ENCODE measurements at regions of chr16 and their contacts with region 1.

Region 1: GRCh38 chr16:71610936-71611871 is 14.8 kb upstream of the MARVELD3 start:
- DNase-seq: peak; percentile 43 to 82 (median 72)
- ATAC-seq: peak; percentile 96
- H3K4me3 ChIP-seq: no peak overlapping the region
- H3K4me3 Mint-ChIP-seq: peak overlapping the region in 4 of 10 donors; percentile 21 to 56 (median 38)
- H3K27ac ChIP-seq: no peak overlapping the region
- H3K27ac Mint-ChIP-seq: no peak overlapping the region
- H3K4me1 ChIP-seq: no peaks in the 10 kb centered on the region
- H3K4me1 Mint-ChIP-seq: peaks cover 0 to 5% (median 0%) of the 10 kb centered on the region in 7 donors
- H3K27me3 ChIP-seq: no peaks in the 10 kb centered on the region
- H3K27me3 Mint-ChIP-seq: peaks cover 11 to 36% (median 22%) of the 10 kb centered on the region in 5 donors

Region 2: GRCh38 chr16:71412270-71413160 is 198.7 kb before region 1 on chr16:
- CTCF ChIA-PET with region 1: interaction called, 10 read pairs
- POLR2A ChIA-PET with region 1: no interaction called
- intact Hi-C with region 1: loop called (anchors 1 kb)
- DNase-seq: peak; percentile 32 to 66 (median 55)
- ATAC-seq: peak; percentile 80
- H3K4me3 ChIP-seq: no peak overlapping the region
- H3K4me3 Mint-ChIP-seq: peak overlapping the region in 1 of 10 donors; percentile 19
- H3K27ac ChIP-seq: no peak overlapping the region
- H3K27ac Mint-ChIP-seq: no peak overlapping the region
- H3K4me1 ChIP-seq: peaks cover 3 to 9% of the 10 kb centered on the region in 2 donors
- H3K4me1 Mint-ChIP-seq: peaks cover 0 to 11% (median 5%) of the 10 kb centered on the region in 7 donors
- H3K27me3 ChIP-seq: peaks cover 0 to 7% of the 10 kb centered on the region in 2 donors
- H3K27me3 Mint-ChIP-seq: peaks cover 27 to 59% (median 39%) of the 10 kb centered on the region in 5 donors

Region 3: GRCh38 chr16:71461686-71462648 is 149.2 kb before region 1 on chr16 and contains the start of gene ZNF23:
- CTCF ChIA-PET with region 1: interaction called, 3 read pairs
- POLR2A ChIA-PET with region 1: no interaction called
- intact Hi-C with region 1: loop called in 1 of 2 experiments (anchors 1 kb)
- DNase-seq: peak; percentile 53 to 84 (median 72)
- ATAC-seq: peak; percentile 99
- H3K4me3 ChIP-seq: peak within 1 kb of the TSS; percentile 92
- H3K4me3 Mint-ChIP-seq: peak within 1 kb of the TSS; percentile 88 to 97 (median 94)
- H3K27ac ChIP-seq: peak within 1 kb of the TSS; percentile 87
- H3K27ac Mint-ChIP-seq: peak within 1 kb of the TSS; percentile 85 to 98 (median 92)
- H3K4me1 ChIP-seq: peaks cover 4 to 6% of the 10 kb centered on the region in 2 donors
- H3K4me1 Mint-ChIP-seq: peaks cover 13 to 39% (median 27%) of the 10 kb centered on the region in 7 donors
- H3K27me3 ChIP-seq: no peaks in the 10 kb centered on the region
- H3K27me3 Mint-ChIP-seq: no peaks in the 10 kb centered on the region
- total RNA-seq, gene ZNF23: 6.5 to 16.0 (median 8.8) TPM

Region 4: GRCh38 chr16:71499775-71500364 is 111.3 kb before region 1 on chr16:
- CTCF ChIA-PET with region 1: interaction called, 6 read pairs
- POLR2A ChIA-PET with region 1: no interaction called
- intact Hi-C with region 1: loop called in 1 of 2 experiments (anchors 2 kb)
- DNase-seq: peak in 8 of 9 donors; percentile 24 to 65 (median 48)
- ATAC-seq: peak; percentile 82
- H3K4me3 ChIP-seq: no peak overlapping the region
- H3K4me3 Mint-ChIP-seq: no peak overlapping the region
- H3K27ac ChIP-seq: no peak overlapping the region
- H3K27ac Mint-ChIP-seq: no peak overlapping the region
- H3K4me1 ChIP-seq: no peaks in the 10 kb centered on the region
- H3K4me1 Mint-ChIP-seq: no peaks in the 10 kb centered on the region
- H3K27me3 ChIP-seq: no peaks in the 10 kb centered on the region
- H3K27me3 Mint-ChIP-seq: peaks cover 0 to 17% (median 5%) of the 10 kb centered on the region in 5 donors

Region 5: DNA sequence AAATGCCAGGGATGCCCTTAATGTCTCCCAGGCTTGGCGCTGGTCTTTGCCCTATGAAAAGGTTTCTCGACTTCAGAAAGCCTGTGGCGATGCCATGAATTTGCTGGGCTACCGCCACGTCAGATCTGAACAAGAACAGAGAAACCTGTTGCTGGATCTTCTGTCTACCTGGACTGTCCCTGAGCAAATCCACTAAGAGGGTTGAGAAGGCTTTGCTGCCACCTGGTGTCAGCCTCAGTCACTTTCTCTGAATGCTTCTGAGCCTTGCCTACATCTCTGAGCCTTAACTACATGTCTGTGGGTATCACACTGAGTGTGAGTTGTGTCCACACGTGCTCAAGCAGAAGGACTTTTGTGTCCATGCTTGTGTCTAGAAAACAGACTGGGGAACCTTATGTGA is 73.6 kb before region 1 on chr16:
- CTCF ChIA-PET with region 1: interaction called, 13 read pairs
- POLR2A ChIA-PET with region 1: no interaction called
- intact Hi-C with region 1: loop called in 1 of 2 experiments (anchors 2 kb)
- DNase-seq: peak in 6 of 9 donors; percentile 5 to 28 (median 10)
- ATAC-seq: peak; percentile 55
- H3K4me3 ChIP-seq: no peak overlapping the region
- H3K4me3 Mint-ChIP-seq: no peak overlapping the region
- H3K27ac ChIP-seq: no peak overlapping the region
- H3K27ac Mint-ChIP-seq: no peak overlapping the region
- H3K4me1 ChIP-seq: no peaks in the 10 kb centered on the region
- H3K4me1 Mint-ChIP-seq: peaks cover 0 to 5% (median 4%) of the 10 kb centered on the region in 7 donors
- H3K27me3 ChIP-seq: no peaks in the 10 kb centered on the region
- H3K27me3 Mint-ChIP-seq: peaks cover 4 to 7% (median 5%) of the 10 kb centered on the region in 5 donors

Region 6: DNA sequence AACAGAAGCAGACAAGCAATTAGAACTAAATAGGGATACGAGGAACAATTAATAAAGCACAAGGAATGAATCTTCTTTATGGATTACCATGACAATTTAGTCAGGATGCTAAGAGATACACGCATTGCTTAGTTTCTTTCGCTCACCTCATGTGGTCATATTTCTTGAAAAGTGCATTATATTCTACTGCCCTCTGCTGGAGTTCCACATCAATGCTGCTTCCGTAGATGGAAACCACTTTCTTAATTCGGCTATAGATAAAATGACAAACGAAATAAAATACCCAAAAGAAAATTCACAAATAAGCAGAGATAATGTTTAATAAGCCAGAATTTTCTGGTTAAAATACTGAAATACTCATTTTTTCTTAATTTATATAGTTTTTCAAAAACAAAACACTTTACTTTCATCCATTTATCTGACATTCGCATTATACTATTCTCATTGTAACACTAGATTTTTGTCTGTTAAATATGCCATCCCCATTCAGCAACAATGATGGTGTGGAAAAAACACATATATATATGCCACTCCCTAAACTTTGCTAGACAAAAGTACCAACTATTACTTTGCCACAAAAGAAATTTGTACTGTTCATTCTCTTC is 135.3 kb after region 1 on chr16:
- CTCF ChIA-PET with region 1: interaction called, 3 read pairs
- POLR2A ChIA-PET with region 1: no interaction called
- intact Hi-C with region 1: loop called (anchors 1 kb)
- DNase-seq: peak in 7 of 9 donors; percentile 14 to 59 (median 45)
- ATAC-seq: peak; percentile 82
- H3K4me3 ChIP-seq: no peak overlapping the region
- H3K4me3 Mint-ChIP-seq: no peak overlapping the region
- H3K27ac ChIP-seq: no peak overlapping the region
- H3K27ac Mint-ChIP-seq: peak overlapping the region in 1 of 9 donors; percentile 14
- H3K4me1 ChIP-seq: no peaks in the 10 kb centered on the region
- H3K4me1 Mint-ChIP-seq: peaks cover 0 to 5% (median 0%) of the 10 kb centered on the region in 7 donors
- H3K27me3 ChIP-seq: no peaks in the 10 kb centered on the region
- H3K27me3 Mint-ChIP-seq: no peaks in the 10 kb centered on the region

Region 7: GRCh38 chr16:72203401-72203800 is 592.2 kb after region 1 on chr16:
- CTCF ChIA-PET with region 1: no interaction called
- POLR2A ChIA-PET with region 1: no interaction called
- intact Hi-C with region 1: no loop called
- DNase-seq: no peak
- ATAC-seq: peak; percentile 62
- H3K4me3 ChIP-seq: no peak overlapping the region
- H3K4me3 Mint-ChIP-seq: peak overlapping the region in 1 of 10 donors; percentile 46
- H3K27ac ChIP-seq: no peak overlapping the region
- H3K27ac Mint-ChIP-seq: peak overlapping the region in 1 of 9 donors; percentile 29
- H3K4me1 ChIP-seq: no peaks in the 10 kb centered on the region
- H3K4me1 Mint-ChIP-seq: peaks cover 0 to 15% (median 0%) of the 10 kb centered on the region in 7 donors
- H3K27me3 ChIP-seq: no peaks in the 10 kb centered on the region
- H3K27me3 Mint-ChIP-seq: peaks cover 8 to 45% (median 11%) of the 10 kb centered on the region in 5 donors

Measured in naive thymus-derived CD4-positive, alpha-beta T cell (primary cell).